Mammary epithelial cell (primary cell): ENCODE measurements at regions of chr1 and their contacts with region 1.

Region 1: DNA sequence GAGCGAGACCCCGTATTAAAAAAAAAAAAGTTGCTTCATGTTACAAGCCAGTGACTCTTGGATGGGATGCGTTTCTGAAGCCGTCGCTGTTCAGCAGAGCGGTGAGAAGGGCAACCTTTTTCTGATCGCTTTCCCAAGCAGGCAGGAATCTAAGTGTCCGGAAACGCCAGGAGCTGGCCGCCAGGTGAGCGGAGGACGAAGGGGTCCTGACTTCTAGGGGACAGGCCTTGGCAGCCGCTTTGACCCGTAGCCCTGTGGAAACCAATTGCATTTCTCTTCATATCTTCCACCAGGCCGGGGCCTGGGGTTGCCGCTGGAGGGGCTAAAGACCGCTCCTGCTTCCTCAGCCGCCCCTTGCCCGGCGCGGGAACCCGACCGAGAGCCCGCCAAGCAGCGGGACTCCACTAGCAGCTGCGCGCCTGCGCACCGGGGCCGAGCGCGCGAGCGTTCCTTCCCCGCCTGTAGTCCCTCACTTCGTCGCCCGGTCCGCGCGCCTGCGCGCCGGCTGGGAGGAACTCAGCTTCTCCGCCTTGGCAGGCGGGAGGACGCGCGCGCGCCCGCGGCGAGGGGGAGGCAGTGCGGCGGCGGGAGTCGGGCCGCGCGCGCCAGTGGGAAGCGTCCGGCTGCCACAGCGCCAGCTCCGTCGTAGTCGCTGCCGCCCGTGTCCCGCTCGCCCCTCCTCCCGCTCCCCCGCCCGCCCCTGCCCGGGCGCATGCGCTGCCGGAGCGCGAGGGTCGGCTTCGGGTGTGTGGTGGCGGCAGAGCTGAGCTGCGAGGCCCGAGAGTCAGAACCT is at the start of gene SPEN:
- DNase-seq: peak; percentile 97
- H3K4me3 ChIP-seq: peak within 1 kb of the TSS; percentile 87 to 99 (median 98)
- H3K27ac ChIP-seq: peak within 1 kb of the TSS; percentile 98
- H3K4me1 ChIP-seq: peaks cover 24% of the 10 kb centered on the region
- H3K27me3 ChIP-seq: no peaks in the 10 kb centered on the region
- CTCF ChIP-seq: peak in 1 of 2 donors; percentile 2
- total RNA-seq, gene SPEN: 32.3 to 48.1 TPM

Region 2: GRCh38 chr1:15364740-15365139 is 482.6 kb before region 1 on chr1:
- CTCF ChIA-PET with region 1: no interaction called
- dilution Hi-C with region 1: no loop called
- in situ Hi-C with region 1: no loop called
- intact Hi-C with region 1: no loop called
- DNase-seq: no peak
- H3K4me3 ChIP-seq: no peak overlapping the region
- H3K27ac ChIP-seq: no peak overlapping the region
- H3K4me1 ChIP-seq: peaks cover 6% of the 10 kb centered on the region
- H3K27me3 ChIP-seq: no peaks in the 10 kb centered on the region
- CTCF ChIP-seq: peak in 1 of 2 donors; percentile 31

Region 3: DNA sequence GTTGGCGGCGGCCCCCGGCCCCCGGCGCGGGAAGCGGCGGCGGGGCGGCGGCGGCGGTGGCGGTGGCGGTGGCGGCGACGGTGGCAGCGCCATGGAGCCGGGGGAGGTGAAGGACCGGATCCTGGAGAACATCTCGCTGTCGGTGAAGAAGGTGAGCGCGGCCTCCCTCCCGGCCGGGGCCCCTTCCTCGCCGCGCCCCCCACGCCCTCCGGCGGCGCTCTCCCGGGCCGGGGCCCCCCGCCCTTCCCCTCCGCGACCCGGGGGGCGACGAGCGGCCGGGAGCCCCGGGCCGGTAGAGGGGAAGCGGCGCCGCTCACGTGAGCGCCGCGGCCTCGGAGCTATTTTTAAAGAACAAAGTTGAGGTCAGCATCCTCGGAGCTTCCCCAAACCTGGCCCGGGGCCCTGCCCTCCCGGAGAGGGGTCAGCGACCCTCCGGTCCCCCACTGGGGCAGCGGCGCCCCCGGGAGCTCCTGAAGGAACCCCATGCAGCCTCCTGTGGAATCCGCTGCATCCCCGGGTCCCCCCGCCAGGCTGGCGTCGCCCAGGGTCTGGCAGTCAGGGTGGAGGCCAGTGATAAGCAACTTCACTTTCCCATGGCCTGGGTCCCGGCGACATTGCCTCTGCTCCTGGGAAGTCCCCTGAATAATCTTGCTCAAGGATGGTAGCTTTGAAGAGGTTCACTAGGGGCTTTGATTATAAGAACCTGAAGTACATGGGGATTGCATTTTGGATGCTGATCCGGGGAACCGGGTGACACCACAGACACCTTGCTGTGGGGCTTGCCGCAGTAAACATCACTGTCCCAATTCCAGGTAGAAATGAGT is 162.6 kb before region 1 on chr1:
- CTCF ChIA-PET with region 1: no interaction called
- dilution Hi-C with region 1: no loop called
- in situ Hi-C with region 1: no loop called
- intact Hi-C with region 1: loop called (anchors 5 kb)
- DNase-seq: peak; percentile 16
- H3K4me3 ChIP-seq: peak overlapping the region; percentile 75 to 92 (median 89)
- H3K27ac ChIP-seq: peak overlapping the region; percentile 43
- H3K4me1 ChIP-seq: peaks cover 37% of the 10 kb centered on the region
- H3K27me3 ChIP-seq: no peaks in the 10 kb centered on the region
- CTCF ChIP-seq: no peak

Region 4: GRCh38 chr1:15835741-15836510 is 11.4 kb before region 1 on chr1:
- CTCF ChIA-PET with region 1: interaction called, 3 read pairs
- dilution Hi-C with region 1: no loop called
- in situ Hi-C with region 1: no loop called
- intact Hi-C with region 1: loop called (anchors 1 kb)
- DNase-seq: peak; percentile 99
- H3K4me3 ChIP-seq: peak overlapping the region; percentile 59 to 87 (median 65)
- H3K27ac ChIP-seq: peak overlapping the region; percentile 91
- H3K4me1 ChIP-seq: peaks cover 27% of the 10 kb centered on the region
- H3K27me3 ChIP-seq: no peaks in the 10 kb centered on the region
- CTCF ChIP-seq: no peak

Region 5: GRCh38 chr1:15885701-15886610 is 38.7 kb after region 1 on chr1:
- CTCF ChIA-PET with region 1: no interaction called
- dilution Hi-C with region 1: no loop called
- in situ Hi-C with region 1: no loop called
- intact Hi-C with region 1: loop called (anchors 2 kb)
- DNase-seq: peak; percentile 86
- H3K4me3 ChIP-seq: peak overlapping the region; percentile 14 to 34 (median 28)
- H3K27ac ChIP-seq: peak overlapping the region; percentile 35
- H3K4me1 ChIP-seq: peaks cover 18% of the 10 kb centered on the region
- H3K27me3 ChIP-seq: no peaks in the 10 kb centered on the region
- CTCF ChIP-seq: peak; percentile 15 to 32

Region 6: GRCh38 chr1:16055613-16056520 is 208.6 kb after region 1 on chr1:
- CTCF ChIA-PET with region 1: no interaction called
- dilution Hi-C with region 1: no loop called
- in situ Hi-C with region 1: no loop called
- intact Hi-C with region 1: no loop called
- DNase-seq: peak; percentile 73
- H3K4me3 ChIP-seq: no peak overlapping the region
- H3K27ac ChIP-seq: no peak overlapping the region
- H3K4me1 ChIP-seq: no peaks in the 10 kb centered on the region
- H3K27me3 ChIP-seq: no peaks in the 10 kb centered on the region
- CTCF ChIP-seq: peak; percentile 88 to 98